Upper lobe of right lung (tissue), 1 donor: ENCODE measurements at regions of chr1 and their contacts with region 1.

Region 1: DNA sequence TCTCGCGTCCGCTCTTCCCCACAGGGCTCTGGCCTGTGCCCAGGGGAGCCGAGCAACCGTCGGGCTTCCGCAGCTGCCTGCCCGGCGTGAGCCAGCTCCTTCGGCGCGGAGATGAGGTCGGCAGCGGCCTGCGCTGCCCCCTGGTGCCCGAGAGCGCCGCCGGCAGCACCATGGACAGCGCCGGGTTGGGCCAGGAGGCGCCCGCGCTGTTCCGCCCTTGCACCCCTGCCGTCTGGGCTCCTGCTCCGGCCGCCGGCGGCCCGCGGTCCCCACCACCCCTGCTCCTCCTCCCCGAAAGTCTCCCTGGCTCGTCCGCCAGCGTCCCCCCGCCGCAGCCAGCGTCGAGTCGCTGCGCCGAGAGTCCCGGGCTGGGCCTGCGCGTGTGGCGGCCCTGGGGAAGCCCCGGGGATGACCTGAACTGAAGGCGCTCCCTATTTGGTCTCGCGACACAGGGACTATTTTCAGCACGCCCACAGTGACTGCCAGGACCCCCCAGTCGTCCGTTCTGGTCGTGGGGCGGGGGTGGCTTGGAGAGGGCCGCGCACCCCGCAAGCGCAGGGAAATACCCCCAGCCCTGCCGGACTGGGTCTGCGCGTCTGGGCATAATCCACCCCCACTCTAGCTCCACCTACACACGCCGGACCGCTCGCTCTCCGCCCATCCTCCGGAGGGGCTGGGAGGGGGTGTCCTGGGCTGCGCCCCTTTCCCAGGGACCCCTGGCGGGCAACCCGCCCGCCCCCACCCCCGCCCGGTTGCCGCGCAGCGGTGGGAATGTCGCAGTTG is 1.3 kb downstream of the HES3 start:
- DNase-seq: peak; percentile 89
- ATAC-seq: peak; percentile 89
- H3K4me3 ChIP-seq: no peak overlapping the region
- H3K27ac ChIP-seq: no peak overlapping the region
- H3K4me1 ChIP-seq: peaks cover 27% of the 10 kb centered on the region
- H3K27me3 ChIP-seq: peaks cover 80% of the 10 kb centered on the region
- CTCF ChIP-seq: peak; percentile 74

Region 2: DNA sequence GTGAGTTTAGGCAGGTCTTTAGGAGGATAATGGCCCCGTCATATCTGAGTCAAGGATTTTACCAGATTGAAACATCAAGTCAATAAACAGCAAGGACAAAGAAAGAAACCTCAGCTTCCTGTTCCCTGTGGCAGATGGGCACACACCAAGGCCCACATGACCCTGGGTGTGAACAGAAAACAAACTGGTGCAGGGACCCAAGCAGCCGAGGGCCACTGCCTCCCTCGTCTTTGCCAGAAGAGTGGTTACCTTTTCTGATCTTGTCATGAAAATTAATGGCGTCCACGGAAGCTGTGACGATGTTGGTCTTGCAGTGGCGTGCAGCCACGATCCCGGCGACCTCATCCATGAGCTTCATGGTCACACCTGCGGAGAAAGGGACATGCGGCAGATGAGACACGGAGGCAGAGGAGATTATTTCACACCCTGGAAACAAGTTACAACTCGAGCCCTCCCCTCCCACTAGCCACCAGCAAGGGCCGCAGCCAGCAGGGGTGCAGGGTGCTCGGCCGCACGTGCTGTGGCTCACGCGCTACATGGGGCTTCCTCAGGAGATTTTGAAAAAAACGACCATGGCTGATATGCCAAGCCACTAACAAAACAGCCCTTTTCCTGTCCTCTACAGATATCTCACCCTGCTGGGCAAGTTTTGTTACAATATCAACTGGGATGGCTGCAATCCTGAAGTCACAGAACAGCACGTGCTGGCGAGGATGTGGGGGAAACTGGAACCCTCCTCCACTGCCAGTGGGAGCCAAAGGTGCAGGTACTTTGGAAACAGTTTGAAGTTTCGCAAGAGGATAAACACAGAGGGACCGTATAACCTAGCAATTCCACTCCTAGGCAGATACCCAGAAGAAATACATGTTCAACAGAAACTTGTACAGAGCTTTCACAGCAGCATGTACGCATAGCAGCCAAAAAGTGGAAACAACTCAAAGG is 49.6 kb after region 1 on chr1:
- intact Hi-C with region 1: no loop called
- DNase-seq: no peak
- ATAC-seq: peak; percentile 44
- H3K4me3 ChIP-seq: no peak overlapping the region
- H3K27ac ChIP-seq: no peak overlapping the region
- H3K4me1 ChIP-seq: no peaks in the 10 kb centered on the region
- H3K27me3 ChIP-seq: no peaks in the 10 kb centered on the region
- CTCF ChIP-seq: no peak

Region 3: GRCh38 chr1:6343506-6344405 is 98.5 kb after region 1 on chr1:
- intact Hi-C with region 1: loop called (anchors 10 kb)
- DNase-seq: peak; percentile 83
- ATAC-seq: peak; percentile 91
- H3K4me3 ChIP-seq: no peak overlapping the region
- H3K27ac ChIP-seq: no peak overlapping the region
- H3K4me1 ChIP-seq: peaks cover 5% of the 10 kb centered on the region
- H3K27me3 ChIP-seq: no peaks in the 10 kb centered on the region
- CTCF ChIP-seq: peak; percentile 83

Region 4: DNA sequence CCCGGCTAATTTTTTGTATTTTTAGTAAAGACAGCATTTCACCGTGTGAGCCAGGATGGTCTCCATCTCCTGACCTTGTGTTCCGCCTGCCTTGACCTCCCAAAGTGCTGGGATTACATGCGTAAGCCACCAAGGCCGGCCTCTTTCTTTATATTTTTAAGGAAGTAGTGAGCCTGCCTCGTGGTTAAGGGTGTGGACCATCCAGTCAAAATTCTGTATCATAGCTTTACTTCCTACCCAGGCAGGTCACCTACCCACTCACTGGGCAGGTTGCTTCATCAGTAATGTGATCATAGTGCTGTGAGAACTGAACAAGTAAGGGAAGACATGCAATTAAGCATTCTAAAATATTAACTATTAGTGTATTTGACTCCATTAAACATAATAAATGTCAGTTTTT is 156.4 kb after region 1 on chr1:
- intact Hi-C with region 1: loop called (anchors 10 kb)
- DNase-seq: no peak
- ATAC-seq: peak; percentile 85
- H3K4me3 ChIP-seq: no peak overlapping the region
- H3K27ac ChIP-seq: no peak overlapping the region
- H3K4me1 ChIP-seq: no peaks in the 10 kb centered on the region
- H3K27me3 ChIP-seq: peaks cover 10% of the 10 kb centered on the region
- CTCF ChIP-seq: no peak